ENCODE measurements at regions of chr17 and their contacts with region 1.

Region 1: DNA sequence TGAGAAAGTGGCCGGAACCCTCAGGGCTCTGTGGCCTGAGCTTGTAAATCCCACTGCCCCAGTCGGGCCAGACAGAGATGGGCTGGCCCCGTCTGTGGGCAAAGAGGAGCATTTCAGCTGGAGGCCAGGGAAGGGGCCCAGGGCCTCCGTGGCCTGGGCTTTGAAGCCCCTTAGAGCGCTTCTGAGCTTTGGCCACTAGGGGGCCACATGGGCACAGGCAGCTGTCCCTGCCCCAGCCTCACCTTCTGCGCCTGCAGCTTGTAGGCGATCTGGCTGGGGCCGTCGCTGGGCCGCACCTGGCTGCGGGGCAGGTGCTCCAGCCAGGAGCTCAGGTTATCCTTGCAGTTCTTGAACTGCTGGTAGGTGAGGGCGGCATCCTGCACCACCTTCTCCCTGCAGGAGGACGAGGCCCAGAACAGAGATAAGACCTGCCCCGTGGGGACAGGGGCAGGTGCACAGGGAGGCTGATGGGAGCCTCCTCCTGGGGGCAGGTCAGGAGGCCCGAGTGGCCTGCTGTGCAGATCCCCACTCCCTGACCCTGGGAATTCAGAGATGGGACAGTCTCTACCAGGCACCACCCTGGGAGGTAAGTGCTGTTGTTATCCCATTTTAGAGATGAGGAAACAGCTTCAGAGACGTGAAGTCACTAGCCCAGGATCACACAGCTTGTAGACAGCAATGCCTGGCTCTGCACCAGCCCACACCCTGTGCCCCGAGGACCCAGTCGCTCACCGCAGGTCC is 12.8 kb downstream of the EVPL start:
- DNase-seq: peak; percentile 76 to 87
- ATAC-seq: peak; percentile 86 to 96
- H3K4me3 ChIP-seq: no peak overlapping the region
- H3K27ac ChIP-seq: peak overlapping the region in 1 of 2 experiments; percentile 26; a peak in 1 of 6 replicates
- H3K4me1 ChIP-seq: no peaks in the 10 kb centered on the region
- CTCF ChIP-seq: peak; percentile 97
- EP300 ChIP-seq: no peak
- POLR2A ChIP-seq: no peak
- RAD21 ChIP-seq: peak; percentile 88 to 90

Region 2: DNA sequence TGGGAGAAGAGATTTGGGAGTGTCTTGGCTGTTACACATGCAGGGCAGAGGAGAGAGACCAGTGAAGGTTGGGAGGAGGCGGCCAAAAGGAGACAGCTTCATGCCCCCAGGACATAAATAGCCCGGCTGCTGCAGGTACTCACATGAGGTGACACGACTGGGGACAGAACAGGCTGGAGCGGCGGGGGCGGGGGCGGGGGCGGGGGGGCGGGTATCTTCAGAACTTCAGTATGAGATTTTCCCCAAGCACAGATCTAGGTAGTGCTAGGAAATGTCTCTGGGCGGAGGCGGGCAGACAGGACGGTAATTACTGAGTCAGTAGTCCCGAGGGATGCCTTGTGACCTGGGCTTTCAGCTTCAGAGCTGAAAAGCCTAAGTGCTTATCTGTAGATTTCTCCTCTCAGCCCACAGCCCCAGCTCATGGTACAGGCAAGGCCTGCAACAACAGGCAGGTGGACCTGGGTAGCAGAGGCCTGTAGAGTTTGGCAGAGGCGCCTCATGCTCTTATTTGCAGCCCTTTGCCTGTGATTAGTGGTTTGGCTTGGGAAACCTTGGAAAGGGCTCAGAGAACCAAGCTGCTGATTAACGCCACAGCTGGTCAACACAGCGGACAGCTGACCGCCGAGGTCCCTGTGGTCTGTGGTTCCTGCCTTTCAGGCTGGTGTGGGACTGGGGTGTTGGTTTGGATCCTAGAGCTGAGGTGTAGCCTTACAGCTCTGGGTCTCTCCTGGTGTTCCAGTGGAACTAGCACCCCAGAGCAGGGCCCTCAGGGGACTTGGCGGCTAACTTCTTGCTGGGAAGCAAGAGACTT is 205.2 kb before region 1 on chr17:
- CTCF ChIA-PET with region 1: no interaction called
- POLR2A ChIA-PET with region 1: no interaction called
- DNase-seq: no peak
- ATAC-seq: peak in 1 of 2 experiments; percentile 13; a peak in 3 of 6 replicates
- H3K4me3 ChIP-seq: no peak overlapping the region
- H3K27ac ChIP-seq: no peak overlapping the region
- H3K4me1 ChIP-seq: no peaks in the 10 kb centered on the region
- CTCF ChIP-seq: no peak
- EP300 ChIP-seq: no peak
- POLR2A ChIP-seq: no peak
- RAD21 ChIP-seq: no peak

Region 3: DNA sequence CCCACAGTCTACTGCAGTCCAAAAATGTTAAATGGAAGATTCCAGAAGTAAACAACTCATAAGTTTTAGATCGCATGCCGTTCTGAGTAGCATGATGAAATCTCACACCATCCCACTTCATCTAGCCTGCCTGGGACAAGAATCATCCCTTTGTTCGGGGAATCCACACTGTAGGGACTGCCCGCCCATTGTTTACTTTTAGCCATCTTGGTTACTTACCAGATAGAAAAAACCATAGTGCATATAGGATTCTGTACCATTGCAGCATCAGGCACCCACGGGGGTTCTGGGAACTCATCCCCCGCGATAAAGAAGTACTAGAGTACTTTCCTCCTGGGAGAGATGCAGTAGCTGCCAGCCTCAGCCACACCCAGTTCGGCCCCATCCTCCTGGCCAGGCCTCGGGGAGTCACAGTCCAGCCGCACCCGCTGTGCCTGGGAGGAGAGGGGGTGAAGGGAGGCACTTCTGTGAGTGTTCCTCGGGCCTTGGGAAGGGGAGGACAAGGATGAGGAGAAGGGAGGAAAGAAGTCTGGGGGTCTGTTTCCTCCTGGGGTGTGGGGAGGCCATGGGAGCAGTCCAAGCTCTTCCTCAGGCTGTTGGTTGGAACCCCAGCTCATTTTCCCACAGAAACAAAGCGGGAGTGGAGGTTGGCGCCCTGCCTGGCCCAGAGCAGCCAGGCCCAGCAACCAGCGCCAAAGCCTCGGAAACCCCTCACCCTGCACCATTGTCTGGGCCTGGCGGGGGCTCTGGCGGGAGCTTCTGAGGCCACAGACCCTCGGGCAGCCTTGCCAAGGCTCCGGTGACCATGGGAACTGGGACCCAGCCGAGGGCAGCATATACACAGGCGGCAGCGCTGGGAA is 144.8 kb before region 1 on chr17:
- CTCF ChIA-PET with region 1: no interaction called
- POLR2A ChIA-PET with region 1: no interaction called
- DNase-seq: peak; percentile 56 to 57
- ATAC-seq: peak in 1 of 2 experiments; percentile 21; a peak in 3 of 6 replicates
- H3K4me3 ChIP-seq: no peak overlapping the region
- H3K27ac ChIP-seq: peak overlapping the region; percentile 66 to 84
- H3K4me1 ChIP-seq: peaks cover 31% of the 10 kb centered on the region
- CTCF ChIP-seq: no peak
- EP300 ChIP-seq: no peak
- POLR2A ChIP-seq: no peak
- RAD21 ChIP-seq: no peak

Region 4: GRCh38 chr17:75904749-75905521 is 109.4 kb before region 1 on chr17 and contains the start of gene MRPL38:
- CTCF ChIA-PET with region 1: interaction called, 372 read pairs
- POLR2A ChIA-PET with region 1: no interaction called
- DNase-seq: peak; percentile 97 to 98
- ATAC-seq: peak; percentile 96 to 97
- H3K4me3 ChIP-seq: peak within 1 kb of the TSS; percentile 87
- H3K27ac ChIP-seq: peak within 1 kb of the TSS; percentile 86 to 93
- H3K4me1 ChIP-seq: peaks cover 22% of the 10 kb centered on the region
- CTCF ChIP-seq: peak; percentile 99
- EP300 ChIP-seq: no peak
- POLR2A ChIP-seq: peak; percentile 92
- RAD21 ChIP-seq: peak; percentile 90 to 98
- polyA plus RNA-seq, gene MRPL38: 43.4 and 53.5 TPM in 2 replicates

Region 5: GRCh38 chr17:76027159-76027839 is 12.9 kb after region 1 on chr17 and contains the start of gene EVPL:
- CTCF ChIA-PET with region 1: interaction called, 408 read pairs
- POLR2A ChIA-PET with region 1: no interaction called
- DNase-seq: peak; percentile 62 to 88
- ATAC-seq: peak; percentile 87 to 94
- H3K4me3 ChIP-seq: peak within 1 kb of the TSS; percentile 74
- H3K27ac ChIP-seq: peak within 1 kb of the TSS; percentile 93
- H3K4me1 ChIP-seq: peaks cover 29% of the 10 kb centered on the region
- CTCF ChIP-seq: no peak
- EP300 ChIP-seq: no peak
- POLR2A ChIP-seq: peak; percentile 70
- RAD21 ChIP-seq: no peak
- polyA plus RNA-seq, gene EVPL: 4.0 and 4.1 TPM in 2 replicates

Region 6: DNA sequence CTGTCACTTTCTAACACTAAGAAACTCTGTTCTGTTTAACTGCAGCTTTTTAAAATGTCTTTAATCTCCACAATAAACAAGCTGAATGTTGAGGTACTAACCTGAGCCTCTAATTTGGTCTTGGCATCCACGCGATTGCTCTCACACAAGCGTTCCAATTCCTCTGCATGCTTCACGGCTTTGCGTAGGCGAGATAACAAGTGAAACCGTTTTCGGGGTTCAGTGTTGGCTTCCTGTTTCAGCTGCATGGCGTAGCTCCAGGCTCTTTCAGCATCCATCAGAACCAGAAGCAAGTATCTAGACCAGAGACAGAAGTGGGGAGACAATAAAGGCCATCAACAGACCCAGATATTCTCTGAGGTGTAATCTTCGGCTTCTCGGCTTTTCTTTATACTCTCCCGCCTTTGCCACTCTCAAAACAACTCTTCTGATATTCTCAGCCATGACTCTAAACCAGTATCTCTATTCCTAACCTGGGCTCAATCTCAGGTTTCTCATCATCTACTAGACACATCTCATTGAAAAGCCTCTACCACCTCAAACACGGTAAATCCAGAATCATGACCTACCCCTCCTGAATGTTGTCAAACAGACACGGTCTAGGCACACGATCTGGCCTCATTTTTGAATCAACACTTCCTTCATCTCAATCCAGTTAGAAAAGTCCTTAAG is 49.7 kb after region 1 on chr17:
- CTCF ChIA-PET with region 1: interaction called, 24 read pairs
- POLR2A ChIA-PET with region 1: no interaction called
- DNase-seq: no peak
- ATAC-seq: no peak
- H3K4me3 ChIP-seq: no peak overlapping the region
- H3K27ac ChIP-seq: no peak overlapping the region
- H3K4me1 ChIP-seq: no peaks in the 10 kb centered on the region
- CTCF ChIP-seq: no peak
- EP300 ChIP-seq: no peak
- POLR2A ChIP-seq: no peak
- RAD21 ChIP-seq: no peak

Region 7: DNA sequence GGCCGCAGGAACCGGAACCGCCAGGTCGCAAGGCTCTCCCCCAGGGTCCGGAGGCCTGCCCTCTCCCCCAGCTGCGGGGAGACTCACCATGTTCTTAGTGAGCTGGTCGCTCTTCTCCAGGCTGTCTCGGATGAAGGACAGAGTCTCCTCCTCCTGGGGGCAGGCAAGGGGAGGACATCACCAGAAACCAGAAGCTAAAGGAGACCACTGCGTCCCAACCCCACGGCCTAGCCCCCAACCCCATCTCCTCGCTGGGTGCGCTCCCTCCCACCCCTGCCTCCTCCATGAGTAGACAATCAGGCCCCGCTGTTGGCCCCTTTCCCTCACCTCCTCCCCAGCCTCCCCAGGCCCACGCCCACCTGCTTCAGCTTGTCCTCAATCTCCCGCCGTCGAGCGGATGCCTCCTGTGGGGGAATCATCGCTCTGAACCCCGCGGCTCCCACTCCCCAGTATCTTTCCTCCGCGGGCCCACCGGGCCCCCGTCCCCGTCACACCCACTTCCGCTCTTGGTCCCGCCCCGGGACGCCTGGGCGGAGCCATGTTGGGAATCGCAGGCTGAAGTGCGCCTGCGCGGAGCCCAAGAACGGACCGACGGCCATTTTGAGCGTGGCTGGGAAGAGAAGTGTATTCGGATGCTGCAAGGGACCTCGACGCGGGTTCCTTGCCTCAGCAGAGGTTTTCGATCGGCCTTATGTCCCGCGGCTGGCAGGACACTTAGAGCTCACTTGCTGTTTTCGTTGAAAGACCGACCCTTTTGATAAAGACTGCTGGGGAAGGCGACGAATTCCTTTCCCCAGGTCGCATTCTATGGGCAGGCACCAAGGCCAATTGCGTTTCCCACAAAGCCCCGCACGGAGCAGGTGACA is 89.2 kb after region 1 on chr17 and contains the start of gene EXOC7:
- CTCF ChIA-PET with region 1: interaction called, 12 read pairs
- POLR2A ChIA-PET with region 1: no interaction called
- DNase-seq: peak; percentile 95
- ATAC-seq: peak; percentile 93 to 96
- H3K4me3 ChIP-seq: peak within 1 kb of the TSS; percentile 69
- H3K27ac ChIP-seq: peak within 1 kb of the TSS; percentile 84 to 87
- H3K4me1 ChIP-seq: peaks cover 11% of the 10 kb centered on the region
- CTCF ChIP-seq: no peak
- EP300 ChIP-seq: no peak
- POLR2A ChIP-seq: peak; percentile 85
- RAD21 ChIP-seq: no peak
- polyA plus RNA-seq, gene EXOC7: 64.5 and 76.4 TPM in 2 replicates

Region 8: GRCh38 chr17:76296186-76296585 is 281.8 kb after region 1 on chr17:
- CTCF ChIA-PET with region 1: interaction called, 21 read pairs
- POLR2A ChIA-PET with region 1: no interaction called
- DNase-seq: no peak
- ATAC-seq: no peak
- H3K4me3 ChIP-seq: no peak overlapping the region
- H3K27ac ChIP-seq: no peak overlapping the region
- H3K4me1 ChIP-seq: no peaks in the 10 kb centered on the region
- CTCF ChIP-seq: no peak
- EP300 ChIP-seq: no peak
- POLR2A ChIP-seq: no peak
- RAD21 ChIP-seq: no peak